Colonic mucosa (tissue), 4 donors: ENCODE measurements at regions of chr6 and their contacts with region 1.

Region 1: DNA sequence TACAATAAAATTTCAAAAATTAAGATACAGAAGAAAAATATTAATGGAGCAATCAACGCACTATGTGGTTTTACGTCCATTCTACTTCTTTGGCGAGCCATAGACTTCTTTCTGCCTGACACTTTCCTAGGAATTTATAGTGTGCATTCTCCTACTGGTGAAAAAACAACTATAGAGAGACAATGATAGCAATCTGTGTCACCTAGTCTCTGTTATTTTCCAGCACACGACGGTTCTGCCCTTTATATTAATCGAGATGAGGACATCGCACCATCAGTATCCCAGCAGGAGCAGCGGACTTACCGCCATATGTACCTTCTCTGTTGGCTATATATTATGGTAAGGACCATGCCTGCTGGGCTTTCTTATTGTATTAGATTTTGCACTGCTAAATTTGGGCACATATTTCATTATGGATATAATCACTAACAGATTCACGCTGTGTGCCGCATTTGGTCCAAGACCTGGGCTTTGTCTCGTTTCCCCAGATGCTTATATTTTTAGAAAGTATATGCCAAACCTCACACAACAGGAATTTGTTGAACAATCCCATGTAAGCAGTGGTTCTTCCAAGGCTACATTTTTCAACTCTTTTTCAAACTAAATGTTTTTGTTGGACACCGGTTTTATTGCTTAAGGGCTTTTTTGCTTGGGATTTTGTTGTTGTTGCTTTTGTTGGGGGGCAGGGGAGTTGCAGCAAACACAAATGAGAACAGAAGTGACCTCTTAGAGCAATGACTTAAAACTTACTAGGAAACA is 166.4 kb downstream of the ADAT2 start:
- DNase-seq: no peak
- H3K4me3 ChIP-seq: no peak overlapping the region
- H3K27ac ChIP-seq: no peak overlapping the region
- H3K4me1 ChIP-seq: no peaks in the 10 kb centered on the region
- H3K27me3 ChIP-seq: no peaks in the 10 kb centered on the region
- CTCF ChIP-seq: no peak

Region 2: DNA sequence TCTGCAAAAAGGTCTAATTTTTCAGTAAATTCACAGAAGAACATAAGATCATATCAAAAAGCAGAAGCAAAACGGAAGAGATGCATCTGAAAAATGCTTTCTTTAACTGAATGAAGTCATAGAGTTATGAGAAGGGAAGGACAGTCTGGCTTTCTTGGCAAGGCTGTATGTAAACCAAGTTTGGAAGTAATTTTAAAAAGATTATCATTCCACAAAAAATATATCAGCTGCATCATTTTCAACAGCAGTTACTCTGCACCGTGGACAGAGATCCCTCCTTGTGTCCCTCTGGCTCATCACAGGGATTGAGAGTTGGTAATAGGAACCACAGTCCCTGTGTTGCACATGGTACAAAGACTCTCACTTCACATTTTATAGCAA is 597.6 kb before region 1 on chr6:
- intact Hi-C with region 1: loop called (anchors 5 kb)
- DNase-seq: no peak
- H3K4me3 ChIP-seq: no peak overlapping the region
- H3K27ac ChIP-seq: no peak overlapping the region
- H3K4me1 ChIP-seq: no peaks in the 10 kb centered on the region
- H3K27me3 ChIP-seq: no peaks in the 10 kb centered on the region
- CTCF ChIP-seq: no peak

Region 3: GRCh38 chr6:143136647-143137046 is 147.4 kb before region 1 on chr6:
- intact Hi-C with region 1: no loop called
- DNase-seq: no peak
- H3K4me3 ChIP-seq: no peak overlapping the region
- H3K27ac ChIP-seq: no peak overlapping the region
- H3K4me1 ChIP-seq: no peaks in the 10 kb centered on the region
- H3K27me3 ChIP-seq: no peaks in the 10 kb centered on the region
- CTCF ChIP-seq: no peak